Mammary epithelial cell (primary cell): ENCODE measurements at regions of chr6 and their contacts with region 1.

Region 1: DNA sequence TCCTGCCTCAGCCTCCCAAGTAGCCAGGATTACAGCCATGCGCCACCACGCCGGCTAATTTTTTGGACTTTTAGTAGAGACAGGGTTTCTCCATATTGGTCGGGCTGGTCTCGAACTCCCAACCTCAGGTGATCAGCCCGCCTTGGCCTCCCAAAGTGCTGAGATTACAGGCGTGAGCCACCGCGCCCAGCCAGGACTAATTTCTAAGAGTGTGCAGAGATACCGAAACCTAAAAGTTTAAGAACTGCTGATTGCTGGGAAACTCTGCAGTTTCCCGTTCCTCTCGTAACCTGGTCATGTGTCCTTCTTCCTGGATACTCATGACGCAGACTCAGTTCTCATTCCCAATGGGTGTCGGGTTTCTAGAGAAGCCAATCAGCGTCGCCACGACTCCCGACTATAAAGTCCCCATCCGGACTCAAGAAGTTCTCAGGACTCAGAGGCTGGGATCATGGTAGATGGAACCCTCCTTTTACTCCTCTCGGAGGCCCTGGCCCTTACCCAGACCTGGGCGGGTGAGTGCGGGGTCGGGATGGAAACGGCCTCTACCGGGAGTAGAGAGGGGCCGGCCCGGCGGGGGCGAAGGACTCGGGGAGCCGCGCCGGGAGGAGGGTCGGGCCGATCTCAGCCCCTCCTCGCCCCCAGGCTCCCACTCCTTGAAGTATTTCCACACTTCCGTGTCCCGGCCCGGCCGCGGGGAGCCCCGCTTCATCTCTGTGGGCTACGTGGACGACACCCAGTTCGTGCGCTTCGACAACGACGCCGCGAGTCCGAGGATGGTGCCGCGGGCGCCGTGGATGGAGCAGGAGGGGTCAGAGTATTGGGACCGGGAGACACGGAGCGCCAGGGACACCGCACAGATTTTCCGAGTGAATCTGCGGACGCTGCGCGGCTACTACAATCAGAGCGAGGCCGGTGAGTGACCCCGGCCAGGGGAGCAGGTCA is at the start of gene HLA-E:
- DNase-seq: peak; percentile 99
- H3K4me3 ChIP-seq: peak within 1 kb of the TSS; percentile 92 to 99 (median 93)
- H3K27ac ChIP-seq: peak within 1 kb of the TSS; percentile 93
- H3K4me1 ChIP-seq: peaks cover 12% of the 10 kb centered on the region
- H3K27me3 ChIP-seq: no peaks in the 10 kb centered on the region
- CTCF ChIP-seq: no peak
- total RNA-seq, gene HLA-E: 106 to 145 TPM

Region 2: GRCh38 chr6:30394139-30394538 is 95.2 kb before region 1 on chr6:
- CTCF ChIA-PET with region 1: no interaction called
- dilution Hi-C with region 1: no loop called
- in situ Hi-C with region 1: no loop called
- intact Hi-C with region 1: no loop called
- DNase-seq: no peak
- H3K4me3 ChIP-seq: no peak overlapping the region
- H3K27ac ChIP-seq: no peak overlapping the region
- H3K4me1 ChIP-seq: no peaks in the 10 kb centered on the region
- H3K27me3 ChIP-seq: peaks cover 2% of the 10 kb centered on the region
- CTCF ChIP-seq: no peak

Region 3: DNA sequence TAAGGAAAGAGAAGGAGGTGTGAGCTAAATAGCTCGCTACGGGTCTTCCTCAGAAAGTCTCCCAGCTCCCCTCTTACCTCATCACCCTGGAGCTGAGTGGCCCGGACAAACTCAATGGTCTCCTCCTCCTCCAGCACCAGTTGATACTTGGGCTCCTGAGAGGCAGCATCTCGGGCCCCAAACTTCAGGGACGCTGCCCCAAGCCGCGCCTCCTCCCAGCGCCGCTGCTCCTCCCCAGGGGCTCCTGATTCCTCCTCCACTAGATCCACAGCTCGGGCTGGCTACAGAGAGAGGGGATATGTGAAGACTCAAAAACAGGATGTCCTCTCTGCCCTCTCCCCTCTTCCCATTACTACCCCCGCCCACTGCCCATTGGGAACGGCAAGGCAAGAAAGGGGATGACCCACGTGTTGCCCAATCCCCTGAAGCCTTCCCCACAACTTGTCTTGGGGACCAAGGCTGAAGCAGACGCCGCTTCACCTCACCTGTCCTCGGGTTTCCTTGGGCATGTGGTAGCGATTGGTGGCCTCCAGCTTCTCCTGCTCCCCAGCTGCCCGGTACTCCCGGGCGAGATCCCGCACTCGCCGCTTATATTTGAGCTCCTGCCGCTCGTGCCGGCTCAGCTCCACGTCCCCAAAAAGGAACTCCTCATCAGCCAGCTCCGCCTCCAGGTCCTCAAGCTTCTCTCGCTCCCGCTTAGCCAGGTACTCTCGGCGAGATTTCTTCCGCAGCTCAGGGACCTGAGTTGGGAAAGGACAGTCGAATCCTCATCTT is 175.8 kb after region 1 on chr6:
- CTCF ChIA-PET with region 1: no interaction called
- dilution Hi-C with region 1: loop called (anchors 5 kb)
- in situ Hi-C with region 1: loop called in 1 of 2 experiments (anchors 10 kb)
- intact Hi-C with region 1: no loop called
- DNase-seq: no peak
- H3K4me3 ChIP-seq: no peak overlapping the region
- H3K27ac ChIP-seq: no peak overlapping the region
- H3K4me1 ChIP-seq: no peaks in the 10 kb centered on the region
- H3K27me3 ChIP-seq: no peaks in the 10 kb centered on the region
- CTCF ChIP-seq: no peak